Mammary epithelial cell (primary cell): ENCODE measurements at regions of chr4 and their contacts with region 1.

Region 1: DNA sequence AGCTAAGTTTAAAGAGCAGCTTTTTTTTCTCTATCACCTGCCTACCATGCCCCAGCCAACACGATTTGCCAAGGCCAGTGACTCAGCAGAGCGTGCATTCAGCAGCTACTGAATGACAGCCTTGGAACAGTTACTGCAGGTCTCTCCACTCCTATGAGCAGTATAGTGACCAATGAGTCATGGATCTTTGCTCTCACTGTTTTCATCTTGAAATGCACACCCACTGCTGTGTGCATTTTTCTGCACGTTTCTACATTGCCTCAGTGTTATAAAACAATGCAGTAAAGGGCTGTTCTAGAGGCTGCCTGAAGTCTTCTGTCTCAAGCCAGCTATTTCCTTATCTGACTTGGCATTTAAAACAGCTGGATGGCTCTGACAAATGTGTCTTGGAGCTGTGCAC is 66.0 kb upstream of the C4orf54 start:
- DNase-seq: peak; percentile 90
- H3K4me3 ChIP-seq: no peak overlapping the region
- H3K27ac ChIP-seq: peak overlapping the region; percentile 8
- H3K4me1 ChIP-seq: peaks cover 23% of the 10 kb centered on the region
- H3K27me3 ChIP-seq: no peaks in the 10 kb centered on the region
- CTCF ChIP-seq: no peak

Region 2: GRCh38 chr4:99655308-99656081 is 68.1 kb before region 1 on chr4:
- CTCF ChIA-PET with region 1: no interaction called
- dilution Hi-C with region 1: no loop called
- in situ Hi-C with region 1: no loop called
- intact Hi-C with region 1: loop called (anchors 5 kb)
- DNase-seq: peak; percentile 93
- H3K4me3 ChIP-seq: no peak overlapping the region
- H3K27ac ChIP-seq: no peak overlapping the region
- H3K4me1 ChIP-seq: peaks cover 23% of the 10 kb centered on the region
- H3K27me3 ChIP-seq: no peaks in the 10 kb centered on the region
- CTCF ChIP-seq: no peak

Region 3: DNA sequence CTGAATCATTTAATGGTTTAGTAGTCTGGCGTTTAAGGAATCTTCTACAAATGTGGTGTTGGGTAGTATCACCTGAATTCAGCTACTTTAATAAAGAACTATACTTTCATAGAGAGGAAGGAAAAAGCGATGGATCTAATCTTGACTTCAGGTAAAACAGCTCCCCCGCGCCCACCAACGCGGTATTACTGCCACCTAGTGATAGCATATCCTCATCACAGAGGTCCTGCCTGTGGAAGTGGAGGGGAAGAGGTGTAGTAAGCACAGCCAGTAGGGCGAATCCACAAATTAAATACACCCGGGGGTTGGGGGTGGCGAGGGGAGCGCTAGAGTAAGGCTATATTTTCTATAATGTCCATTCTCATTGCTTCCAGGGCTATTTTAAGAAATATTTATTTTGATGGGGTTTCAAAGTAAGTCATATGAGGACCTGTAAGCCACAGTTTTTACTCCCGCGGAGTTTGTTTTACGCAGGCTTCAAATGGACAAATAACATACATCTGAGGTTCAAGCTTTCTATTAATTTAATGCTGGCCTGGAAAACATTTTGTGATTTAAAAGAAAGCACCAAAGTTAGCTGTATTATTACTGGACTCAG is 84.7 kb after region 1 on chr4:
- CTCF ChIA-PET with region 1: interaction called, 3 read pairs
- dilution Hi-C with region 1: no loop called
- in situ Hi-C with region 1: no loop called
- intact Hi-C with region 1: loop called (anchors 1 kb)
- DNase-seq: peak; percentile 58
- H3K4me3 ChIP-seq: no peak overlapping the region
- H3K27ac ChIP-seq: no peak overlapping the region
- H3K4me1 ChIP-seq: no peaks in the 10 kb centered on the region
- H3K27me3 ChIP-seq: peaks cover 3% of the 10 kb centered on the region
- CTCF ChIP-seq: peak; percentile 81 to 90

Region 4: DNA sequence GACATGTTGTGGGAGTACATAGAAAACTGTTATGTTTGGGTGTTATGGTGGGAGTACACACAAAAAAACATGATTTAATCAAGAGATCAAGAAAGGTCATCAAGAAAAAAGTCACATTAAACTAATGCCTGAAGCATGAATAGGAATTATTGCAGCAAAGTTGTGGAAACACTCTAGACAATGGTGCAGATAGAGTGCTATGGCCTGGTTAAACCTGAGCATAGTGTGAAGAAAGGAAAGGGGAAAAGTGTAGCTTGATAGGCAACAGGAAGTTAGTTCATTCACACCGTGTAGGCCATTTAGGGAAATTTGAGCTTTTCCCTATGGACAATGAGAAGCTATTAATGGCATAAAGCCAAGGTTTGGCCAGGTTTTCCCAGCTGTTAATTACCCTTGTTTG is 956.3 kb after region 1 on chr4:
- CTCF ChIA-PET with region 1: no interaction called
- dilution Hi-C with region 1: no loop called
- in situ Hi-C with region 1: no loop called
- intact Hi-C with region 1: no loop called
- DNase-seq: no peak
- H3K4me3 ChIP-seq: no peak overlapping the region
- H3K27ac ChIP-seq: no peak overlapping the region
- H3K4me1 ChIP-seq: no peaks in the 10 kb centered on the region
- H3K27me3 ChIP-seq: no peaks in the 10 kb centered on the region
- CTCF ChIP-seq: no peak